Activated naive CD4-positive, alpha-beta T cell treated with anti-CD3 and anti-CD28 coated beads for 36 hours (primary cell): ENCODE measurements at regions of chr13 and their contacts with region 1.

Region 1: DNA sequence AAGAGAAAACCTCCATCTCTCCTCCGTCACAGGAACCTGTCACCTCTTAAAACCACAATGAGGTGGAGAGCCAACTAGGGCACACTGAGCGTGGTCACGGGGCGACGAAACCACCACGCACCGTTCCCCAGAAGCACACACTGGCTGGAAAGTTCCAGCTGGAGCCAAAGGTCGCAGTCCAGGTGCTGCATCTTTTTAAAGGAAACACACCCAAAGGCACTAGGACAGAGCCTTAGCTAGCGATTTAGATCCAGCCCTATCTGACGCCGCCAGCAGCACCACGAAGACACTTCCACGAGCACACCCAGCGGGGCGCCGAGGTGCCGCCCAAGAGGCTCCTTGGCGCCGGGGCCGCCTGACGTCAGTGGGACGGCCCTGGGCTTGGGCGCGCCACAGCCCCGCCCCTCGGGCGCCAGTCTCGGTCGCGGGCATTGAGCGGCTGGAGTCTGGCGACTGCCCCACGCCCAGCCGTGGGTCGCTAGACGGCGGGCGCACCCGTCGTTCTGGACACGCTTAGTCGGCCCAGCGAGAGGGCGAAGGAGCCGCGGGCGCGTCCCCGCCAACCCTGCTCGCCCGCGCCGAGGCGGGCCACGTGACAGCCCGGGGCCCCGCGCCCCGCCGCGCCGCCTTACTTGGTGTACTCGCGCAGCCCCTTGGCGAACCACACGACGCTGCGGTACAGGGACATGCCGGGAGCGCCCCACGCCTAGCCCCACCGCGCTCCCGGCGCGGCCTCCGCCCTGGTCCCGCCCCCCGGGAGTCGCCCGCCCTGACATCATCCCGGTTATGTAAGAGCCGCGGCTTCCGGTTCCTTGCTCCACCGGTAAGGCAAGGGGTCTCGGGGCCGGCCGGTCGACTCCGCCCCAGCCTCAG is at the start of gene DHRS12:
- DNase-seq: peak; percentile 89
- H3K4me3 Mint-ChIP-seq: peak within 1 kb of the TSS; percentile 92
- H3K27ac Mint-ChIP-seq: peak within 1 kb of the TSS; percentile 98
- H3K4me1 Mint-ChIP-seq: peaks cover 57% of the 10 kb centered on the region
- H3K27me3 Mint-ChIP-seq: no peaks in the 10 kb centered on the region
- total RNA-seq, gene DHRS12: 4.1 to 4.9 TPM

Region 2: GRCh38 chr13:49936085-49936940 is 1867.3 kb before region 1 on chr13 and contains the start of gene SPRYD7:
- CTCF ChIA-PET with region 1: no interaction called
- intact Hi-C with region 1: loop called (anchors 5 kb)
- DNase-seq: peak; percentile 96
- H3K4me3 Mint-ChIP-seq: peak within 1 kb of the TSS; percentile 90
- H3K27ac Mint-ChIP-seq: peak within 1 kb of the TSS; percentile 70
- H3K4me1 Mint-ChIP-seq: peaks cover 7% of the 10 kb centered on the region
- H3K27me3 Mint-ChIP-seq: peaks cover 2% of the 10 kb centered on the region
- total RNA-seq, gene SPRYD7: 2.5 to 2.6 TPM

Region 3: DNA sequence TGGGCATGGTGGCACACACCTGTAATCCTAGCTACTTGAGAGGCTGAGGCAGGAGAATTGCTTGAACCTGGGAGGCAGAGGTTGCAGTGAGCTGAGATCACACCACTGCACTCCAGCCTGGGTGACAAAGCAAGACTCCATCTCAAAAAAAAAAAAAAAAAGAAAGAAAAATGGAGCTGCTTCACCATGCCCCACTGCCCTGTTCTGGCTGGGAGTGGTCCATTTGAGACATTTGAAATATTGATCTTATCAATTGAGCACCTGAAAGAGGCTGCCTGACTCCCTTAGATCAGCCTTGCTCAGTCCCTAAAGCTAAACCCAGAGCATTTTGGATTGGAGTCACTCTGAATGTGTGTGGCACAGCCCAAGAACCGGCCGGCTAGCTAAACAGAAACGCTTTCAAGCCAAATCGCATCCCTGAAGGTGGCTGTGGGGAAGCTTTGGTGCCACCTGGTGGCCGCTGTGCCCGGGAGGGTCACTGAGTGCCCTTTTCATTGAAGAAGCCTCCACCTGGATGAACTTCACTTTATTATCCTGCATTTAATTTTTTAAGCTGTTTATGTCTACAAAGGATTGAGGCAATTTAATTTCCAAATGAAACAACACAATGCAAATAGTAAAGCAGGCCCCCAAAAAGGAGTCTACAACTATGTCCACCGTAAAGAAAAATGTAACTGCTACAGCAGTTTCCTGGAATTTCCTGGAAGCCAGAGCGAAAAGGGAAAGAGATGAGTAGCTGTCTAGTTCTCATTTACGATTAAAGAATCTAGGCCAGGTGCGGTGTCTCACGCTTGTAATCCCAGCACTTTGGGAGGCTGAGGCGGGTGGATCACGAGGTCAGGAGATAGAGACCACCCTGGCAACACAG is 517.3 kb before region 1 on chr13:
- CTCF ChIA-PET with region 1: interaction called, 36 read pairs
- intact Hi-C with region 1: no loop called
- DNase-seq: peak; percentile 87
- H3K4me3 Mint-ChIP-seq: no peak overlapping the region
- H3K27ac Mint-ChIP-seq: no peak overlapping the region
- H3K4me1 Mint-ChIP-seq: no peaks in the 10 kb centered on the region
- H3K27me3 Mint-ChIP-seq: no peaks in the 10 kb centered on the region

Region 4: DNA sequence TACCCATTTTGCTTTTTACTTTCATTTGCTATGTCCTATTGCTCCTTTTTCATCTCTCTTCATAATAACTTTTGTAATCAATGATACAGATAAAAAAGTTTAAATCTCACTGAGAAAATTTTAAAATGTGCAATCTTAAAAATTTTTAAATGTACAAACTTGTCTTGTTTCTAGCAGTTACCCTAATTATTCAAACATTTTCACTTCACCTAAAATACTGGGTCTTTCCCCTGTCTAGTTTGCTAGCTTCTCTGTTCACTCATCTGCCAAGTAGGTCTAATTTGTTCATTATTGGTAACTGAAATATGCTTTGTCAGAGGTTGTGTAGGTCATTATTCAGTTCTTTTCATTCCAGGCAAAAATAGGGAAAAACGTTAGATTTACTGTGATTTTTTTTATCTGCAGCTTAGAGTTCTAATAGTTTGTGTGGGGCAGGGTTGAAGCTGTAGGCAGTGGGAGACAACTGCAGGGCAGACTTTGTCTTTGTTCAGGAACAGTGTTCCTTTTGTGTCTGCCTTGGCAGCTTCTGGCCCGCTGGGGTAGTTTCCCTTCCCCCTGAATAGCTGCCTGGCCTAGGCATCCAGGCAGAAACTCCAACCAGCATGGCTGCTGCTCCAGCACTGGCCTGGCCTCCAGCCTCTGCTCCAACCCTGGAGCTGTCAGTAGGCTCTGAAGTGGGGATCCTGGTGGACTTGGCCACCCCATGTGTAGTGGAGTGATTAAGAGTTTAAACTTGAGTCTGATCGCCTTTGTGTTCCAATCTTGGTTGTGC is 170.9 kb before region 1 on chr13:
- CTCF ChIA-PET with region 1: no interaction called
- intact Hi-C with region 1: no loop called
- DNase-seq: no peak
- H3K4me3 Mint-ChIP-seq: no peak overlapping the region
- H3K27ac Mint-ChIP-seq: no peak overlapping the region
- H3K4me1 Mint-ChIP-seq: peaks cover 57% of the 10 kb centered on the region
- H3K27me3 Mint-ChIP-seq: no peaks in the 10 kb centered on the region

Region 5: GRCh38 chr13:51764184-51765141 is 39.2 kb before region 1 on chr13:
- CTCF ChIA-PET with region 1: interaction called, 13 read pairs
- intact Hi-C with region 1: loop called (anchors 1 kb)
- DNase-seq: peak; percentile 84
- H3K4me3 Mint-ChIP-seq: peak overlapping the region; percentile 73
- H3K27ac Mint-ChIP-seq: peak overlapping the region; percentile 82
- H3K4me1 Mint-ChIP-seq: peaks cover 35% of the 10 kb centered on the region
- H3K27me3 Mint-ChIP-seq: no peaks in the 10 kb centered on the region

Region 6: GRCh38 chr13:51832471-51833152 is 29.0 kb after region 1 on chr13:
- CTCF ChIA-PET with region 1: interaction called, 16 read pairs
- intact Hi-C with region 1: no loop called
- DNase-seq: peak; percentile 79
- H3K4me3 Mint-ChIP-seq: no peak overlapping the region
- H3K27ac Mint-ChIP-seq: peak overlapping the region; percentile 57
- H3K4me1 Mint-ChIP-seq: peaks cover 44% of the 10 kb centered on the region
- H3K27me3 Mint-ChIP-seq: no peaks in the 10 kb centered on the region

Region 7: DNA sequence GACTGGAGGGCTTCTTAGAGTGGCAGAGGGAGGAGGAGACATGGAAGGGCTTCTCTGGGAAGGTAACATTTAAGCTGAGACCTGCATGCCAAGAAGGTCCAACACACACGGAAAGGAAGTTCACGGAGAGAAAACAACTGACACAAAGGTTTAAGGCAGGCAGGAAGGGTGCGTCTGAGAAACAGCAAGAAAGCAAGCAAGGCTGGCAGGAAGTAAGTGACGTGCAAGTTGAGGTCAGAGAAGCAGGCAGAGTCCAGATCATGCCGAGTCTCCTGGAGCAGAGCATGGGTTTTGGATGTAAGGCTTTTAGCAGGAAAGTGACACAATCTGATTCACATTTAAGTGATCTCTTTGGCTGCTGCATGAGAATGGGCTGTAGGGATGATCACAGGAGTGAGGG is 147.1 kb after region 1 on chr13:
- CTCF ChIA-PET with region 1: no interaction called
- intact Hi-C with region 1: no loop called
- DNase-seq: peak; percentile 62
- H3K4me3 Mint-ChIP-seq: peak overlapping the region; percentile 32
- H3K27ac Mint-ChIP-seq: peak overlapping the region; percentile 16
- H3K4me1 Mint-ChIP-seq: peaks cover 36% of the 10 kb centered on the region
- H3K27me3 Mint-ChIP-seq: no peaks in the 10 kb centered on the region

Region 8: DNA sequence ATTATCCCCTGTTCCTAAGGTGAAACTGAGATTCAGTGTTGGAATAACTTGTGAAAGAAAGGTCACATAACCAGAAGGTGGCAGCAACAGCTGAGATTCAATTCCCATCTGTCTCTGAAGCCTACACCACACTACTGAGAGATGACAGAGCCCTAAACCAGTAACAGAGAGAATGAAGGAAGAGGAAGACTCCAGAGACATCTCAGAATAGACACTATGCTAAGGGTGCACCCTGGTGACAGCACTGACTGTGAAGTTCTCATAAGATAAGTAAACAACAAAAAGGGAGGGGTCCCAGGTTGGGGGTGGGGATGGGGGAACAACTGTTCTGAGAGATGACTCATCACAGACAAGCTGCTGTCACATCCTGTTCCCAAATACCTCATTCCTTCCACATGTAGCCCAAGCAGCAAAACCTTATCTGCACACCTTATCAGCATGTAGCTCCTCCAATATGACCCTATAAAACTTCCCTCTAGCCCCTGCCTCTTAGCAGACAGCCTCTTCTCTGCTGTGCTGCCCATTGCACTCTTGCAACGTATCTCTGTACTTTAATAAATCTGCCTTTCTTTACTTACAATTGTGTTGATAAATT is 267.4 kb after region 1 on chr13:
- CTCF ChIA-PET with region 1: no interaction called
- intact Hi-C with region 1: loop called (anchors 2 kb)
- DNase-seq: peak; percentile 73
- H3K4me3 Mint-ChIP-seq: no peak overlapping the region
- H3K27ac Mint-ChIP-seq: no peak overlapping the region
- H3K4me1 Mint-ChIP-seq: peaks cover 11% of the 10 kb centered on the region
- H3K27me3 Mint-ChIP-seq: peaks cover 16% of the 10 kb centered on the region